Calu3 (cell line): ENCODE measurements at regions of chr16 and their contacts with region 1.

Region 1: DNA sequence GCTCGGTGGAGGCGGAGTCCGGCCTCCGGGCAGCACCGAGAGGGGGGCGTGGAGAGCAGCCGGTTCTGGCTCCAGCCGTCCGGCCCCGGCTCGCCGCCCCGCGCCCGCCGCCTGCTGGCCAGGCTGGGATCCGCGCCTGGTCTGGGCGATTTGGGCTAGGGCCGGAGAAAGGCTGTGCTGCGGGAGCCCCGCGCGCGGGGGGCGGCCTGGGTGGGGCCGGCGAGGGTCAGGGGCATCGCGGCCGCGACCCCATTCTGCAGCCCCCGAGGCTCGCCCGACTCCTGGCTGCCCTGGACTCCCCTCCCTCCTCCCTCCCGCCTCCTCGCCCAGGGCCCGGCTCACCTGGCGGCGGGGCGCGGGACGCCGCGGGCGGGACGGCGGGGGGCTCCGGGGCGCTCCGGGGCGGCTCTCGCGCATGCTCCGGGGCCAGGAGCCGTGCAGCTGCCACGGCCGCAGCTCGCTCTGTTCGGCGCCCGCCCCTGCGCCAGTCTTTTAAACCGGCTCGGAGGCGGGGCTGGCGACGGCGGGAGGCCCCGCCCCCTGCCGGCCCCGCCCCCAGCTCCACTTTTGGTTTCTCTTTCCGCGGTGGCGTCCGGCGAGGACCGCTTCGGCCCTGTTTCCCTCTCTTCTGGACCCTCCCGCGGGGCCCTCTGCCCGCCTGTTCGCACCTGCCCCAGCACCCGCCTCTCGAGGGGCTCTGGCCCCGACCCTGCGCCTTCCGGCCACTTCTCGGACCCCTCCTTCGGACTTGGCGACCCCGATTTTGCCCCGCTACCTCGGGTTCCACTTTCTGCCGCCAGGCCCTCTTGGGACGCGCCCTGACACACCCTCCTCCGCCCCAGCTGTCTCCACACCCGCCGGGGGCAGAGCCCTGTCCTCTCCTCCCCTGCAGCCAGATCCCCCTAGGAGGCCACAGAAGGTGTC is at the start of gene SOCS1:
- DNase-seq: peak; percentile 96
- H3K4me3 Mint-ChIP-seq: peak within 1 kb of the TSS; percentile 92
- H3K27ac Mint-ChIP-seq: peak within 1 kb of the TSS; percentile 85
- H3K4me1 Mint-ChIP-seq: peaks cover 29% of the 10 kb centered on the region
- H3K27me3 Mint-ChIP-seq: no peaks in the 10 kb centered on the region
- CTCF ChIP-seq: peak; percentile 98
- total RNA-seq, gene SOCS1: 4.8 and 5.8 TPM in 2 replicates

Region 2: GRCh38 chr16:10971560-10971961 is 284.4 kb before region 1 on chr16:
- CTCF ChIA-PET with region 1: interaction called, 21 read pairs
- intact Hi-C with region 1: loop called (anchors 1 kb)
- DNase-seq: peak; percentile 64
- H3K4me3 Mint-ChIP-seq: no peak overlapping the region
- H3K27ac Mint-ChIP-seq: no peak overlapping the region
- H3K4me1 Mint-ChIP-seq: peaks cover 12% of the 10 kb centered on the region
- H3K27me3 Mint-ChIP-seq: no peaks in the 10 kb centered on the region
- CTCF ChIP-seq: peak; percentile 83

Region 3: DNA sequence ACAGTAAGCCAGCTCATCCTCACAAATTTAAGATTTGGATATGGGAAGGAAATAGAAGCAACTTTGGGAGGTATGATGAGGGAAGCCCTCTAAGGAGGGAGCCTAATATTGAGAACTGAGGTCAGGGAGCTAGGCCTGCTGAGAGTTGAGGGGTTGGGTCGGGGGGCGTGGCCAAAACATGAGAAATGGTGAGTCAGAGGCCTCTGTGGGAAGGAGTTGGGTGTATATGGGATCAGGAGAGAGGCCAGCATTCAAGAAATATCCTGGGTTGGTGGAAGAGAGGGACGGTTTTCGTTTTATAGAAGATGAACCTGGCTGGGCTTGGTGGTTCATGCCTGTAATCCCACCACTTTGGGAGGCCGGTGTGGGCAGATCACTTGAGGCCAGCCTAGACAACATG is 263.2 kb before region 1 on chr16:
- CTCF ChIA-PET with region 1: interaction called, 4 read pairs
- intact Hi-C with region 1: loop called (anchors 5 kb)
- DNase-seq: peak; percentile 87
- H3K4me3 Mint-ChIP-seq: peak overlapping the region; percentile 31
- H3K27ac Mint-ChIP-seq: peak overlapping the region; percentile 90
- H3K4me1 Mint-ChIP-seq: peaks cover 51% of the 10 kb centered on the region
- H3K27me3 Mint-ChIP-seq: no peaks in the 10 kb centered on the region
- CTCF ChIP-seq: no peak

Region 4: GRCh38 chr16:11133344-11133943 is 122.6 kb before region 1 on chr16:
- CTCF ChIA-PET with region 1: interaction called, 12 read pairs
- intact Hi-C with region 1: loop called (anchors 10 kb)
- DNase-seq: peak; percentile 77
- H3K4me3 Mint-ChIP-seq: no peak overlapping the region
- H3K27ac Mint-ChIP-seq: peak overlapping the region; percentile 62
- H3K4me1 Mint-ChIP-seq: peaks cover 10% of the 10 kb centered on the region
- H3K27me3 Mint-ChIP-seq: no peaks in the 10 kb centered on the region
- CTCF ChIP-seq: no peak

Region 5: DNA sequence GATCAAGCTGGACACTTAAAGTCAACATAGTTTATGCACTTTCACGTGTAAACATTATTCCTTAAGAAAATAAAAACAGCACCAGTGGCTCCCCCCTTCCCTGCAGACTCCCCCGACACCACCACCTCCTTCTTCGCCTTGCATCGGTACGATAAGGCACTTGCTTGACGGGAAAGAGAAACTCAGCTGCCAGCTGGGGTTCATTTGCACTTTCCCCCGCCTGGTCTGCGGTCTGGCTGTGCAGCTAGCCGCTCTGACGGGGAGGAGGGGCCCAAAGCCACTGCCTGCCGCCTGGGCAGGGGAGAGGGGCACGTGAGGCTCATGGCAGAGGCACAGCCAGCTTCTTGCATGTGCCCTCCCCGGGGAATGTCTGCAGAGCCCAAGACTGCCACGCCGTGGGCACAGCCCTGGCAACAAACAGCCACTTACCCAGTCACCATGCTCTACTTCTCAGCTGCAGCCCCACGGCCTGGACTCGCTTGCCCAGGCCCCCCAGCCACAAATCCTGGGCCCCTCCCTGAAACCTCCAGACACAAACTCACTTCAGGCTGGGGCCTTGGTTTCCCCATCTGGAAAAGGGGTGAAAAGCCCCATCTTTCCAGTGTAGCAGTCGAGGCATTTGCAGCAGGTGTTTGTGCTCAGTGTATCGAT is 41.6 kb after region 1 on chr16:
- CTCF ChIA-PET with region 1: interaction called, 20 read pairs
- intact Hi-C with region 1: loop called (anchors 5 kb)
- DNase-seq: peak; percentile 81
- H3K4me3 Mint-ChIP-seq: peak overlapping the region; percentile 6
- H3K27ac Mint-ChIP-seq: no peak overlapping the region
- H3K4me1 Mint-ChIP-seq: peaks cover 13% of the 10 kb centered on the region
- H3K27me3 Mint-ChIP-seq: peaks cover 11% of the 10 kb centered on the region
- CTCF ChIP-seq: no peak

Region 6: GRCh38 chr16:11586856-11587642 is 331.1 kb after region 1 on chr16 and contains the start of gene LITAF:
- CTCF ChIA-PET with region 1: no interaction called
- intact Hi-C with region 1: no loop called
- DNase-seq: peak; percentile 80
- H3K4me3 Mint-ChIP-seq: peak within 1 kb of the TSS; percentile 77
- H3K27ac Mint-ChIP-seq: peak within 1 kb of the TSS; percentile 98
- H3K4me1 Mint-ChIP-seq: peaks cover 33% of the 10 kb centered on the region
- H3K27me3 Mint-ChIP-seq: no peaks in the 10 kb centered on the region
- CTCF ChIP-seq: no peak
- total RNA-seq, gene LITAF: 328 and 443 TPM in 2 replicates